MCF 10A (cell line): ENCODE measurements at regions of chr20 and their contacts with region 1.

Region 1: DNA sequence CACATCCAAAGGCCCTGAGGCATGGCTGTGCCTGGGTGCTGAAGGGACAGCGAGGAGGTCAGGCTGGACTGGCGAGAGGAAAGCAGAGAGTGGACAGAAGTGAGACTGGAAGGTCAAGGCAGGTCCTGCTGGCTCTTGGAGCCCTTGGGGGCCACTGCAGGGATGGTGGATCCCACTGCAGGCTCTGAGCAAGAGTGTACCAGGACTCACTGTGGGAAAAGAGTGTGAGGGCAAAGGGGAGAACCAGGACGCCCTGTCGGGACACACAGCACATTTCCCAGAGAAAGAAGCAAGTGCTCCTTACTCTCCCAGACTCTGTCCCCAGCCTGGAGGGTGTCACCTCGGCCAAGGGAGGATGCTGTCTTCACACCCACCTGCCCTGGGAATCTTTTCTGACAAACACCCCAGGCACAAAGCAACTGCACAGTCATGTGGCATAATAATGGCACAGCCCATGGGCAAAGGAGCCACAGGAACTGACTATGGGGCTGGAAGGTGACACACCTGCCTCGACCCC is 172.3 kb upstream of the CST7 start:
- DNase-seq: no peak
- H3K4me3 Mint-ChIP-seq: no peak overlapping the region
- H3K27ac Mint-ChIP-seq: no peak overlapping the region
- H3K4me1 Mint-ChIP-seq: no peaks in the 10 kb centered on the region
- H3K27me3 Mint-ChIP-seq: peaks cover 4% of the 10 kb centered on the region
- CTCF ChIP-seq: no peak

Region 2: DNA sequence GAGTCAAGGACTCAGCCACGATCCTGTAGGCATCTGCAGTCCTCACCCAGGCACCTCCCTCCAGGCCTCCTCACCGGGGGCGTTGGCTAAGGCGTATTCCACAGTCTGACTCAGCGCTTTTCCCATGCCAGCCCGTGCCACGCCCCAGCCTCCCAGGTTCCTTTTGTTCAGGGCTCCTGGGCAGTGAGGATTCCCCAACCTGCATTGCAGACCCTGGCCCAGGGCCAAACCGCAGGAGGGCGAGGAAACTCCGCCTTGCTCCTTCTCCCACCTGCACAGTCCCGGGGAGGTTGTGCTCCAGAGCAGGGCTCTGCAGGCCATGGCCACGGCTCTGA is 30.5 kb before region 1 on chr20:
- CTCF ChIA-PET with region 1: no interaction called
- POLR2A ChIA-PET with region 1: no interaction called
- intact Hi-C with region 1: loop called (anchors 1 kb)
- DNase-seq: peak; percentile 93
- H3K4me3 Mint-ChIP-seq: no peak overlapping the region
- H3K27ac Mint-ChIP-seq: no peak overlapping the region
- H3K4me1 Mint-ChIP-seq: no peaks in the 10 kb centered on the region
- H3K27me3 Mint-ChIP-seq: no peaks in the 10 kb centered on the region
- CTCF ChIP-seq: no peak